PC-3 (cell line): ENCODE measurements at regions of chr7 and their contacts with region 1.

Region 1: GRCh38 chr7:96219382-96220130 is 102.3 kb downstream of the SLC25A13 start:
- DNase-seq: peak; percentile 93
- ATAC-seq: peak; percentile 97
- H3K4me3 ChIP-seq: no peak overlapping the region
- H3K27ac ChIP-seq: peak overlapping the region; percentile 74
- H3K4me1 ChIP-seq: peaks cover 25% of the 10 kb centered on the region
- H3K27me3 ChIP-seq: no peaks in the 10 kb centered on the region
- CTCF ChIP-seq: no peak

Region 2: DNA sequence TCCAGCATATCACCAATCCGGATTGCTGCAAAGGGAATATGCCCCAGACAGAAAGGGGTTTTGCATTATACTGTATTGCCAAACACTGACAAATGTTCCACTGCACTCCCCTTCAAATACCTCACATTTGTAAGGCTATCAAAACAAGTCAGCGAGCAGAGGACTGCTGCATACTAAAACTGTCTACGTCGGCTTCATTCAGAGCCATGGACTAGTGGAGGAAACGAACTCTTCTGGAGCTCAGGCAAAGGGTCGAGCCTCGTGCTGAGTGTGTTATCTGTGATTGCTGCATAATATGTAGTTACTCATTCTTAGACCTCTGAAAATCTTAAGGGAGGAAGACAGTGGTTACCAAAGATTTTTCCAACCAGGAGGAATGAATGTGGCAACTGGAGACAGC is 247.0 kb before region 1 on chr7:
- CTCF ChIA-PET with region 1: no interaction called
- POLR2A ChIA-PET with region 1: no interaction called
- intact Hi-C with region 1: no loop called
- DNase-seq: no peak
- ATAC-seq: no peak
- H3K4me3 ChIP-seq: no peak overlapping the region
- H3K27ac ChIP-seq: no peak overlapping the region
- H3K4me1 ChIP-seq: 0 out of 2 replicates have a peak, but pooled peaks cover 11% of the 10 kb centered on the region
- H3K27me3 ChIP-seq: no peaks in the 10 kb centered on the region
- CTCF ChIP-seq: no peak

Region 3: DNA sequence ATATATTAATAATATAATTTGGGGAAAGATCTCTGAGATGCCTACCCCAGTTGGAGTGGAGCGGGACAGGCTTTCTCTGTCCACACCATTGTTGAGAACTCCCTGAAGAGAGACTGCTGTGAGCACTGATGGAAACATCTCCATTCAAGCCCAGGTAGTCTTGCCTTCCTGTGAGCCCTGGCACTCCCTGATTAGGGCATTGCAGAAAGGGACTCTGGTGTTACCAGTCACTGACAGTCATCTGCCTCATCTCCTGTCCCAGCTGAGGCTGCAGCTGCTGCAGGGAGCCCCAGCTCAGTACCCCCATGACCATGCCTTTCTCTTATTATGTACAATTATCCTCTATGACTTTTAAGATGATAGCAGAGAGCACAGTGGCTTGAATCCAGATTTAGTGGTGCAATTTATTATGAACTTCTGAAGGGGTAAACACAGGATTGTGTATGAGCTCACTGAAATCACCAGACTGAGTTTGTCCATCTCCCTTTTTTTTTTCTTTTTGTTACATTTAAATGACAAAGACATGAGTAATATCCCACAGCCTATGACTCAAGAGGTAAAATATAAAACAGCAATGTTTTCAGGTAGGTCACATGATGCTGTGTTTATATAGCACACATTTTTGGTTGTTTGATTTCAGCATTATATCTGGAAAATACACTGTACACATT is 134.5 kb before region 1 on chr7:
- CTCF ChIA-PET with region 1: no interaction called
- POLR2A ChIA-PET with region 1: no interaction called
- intact Hi-C with region 1: loop called (anchors 5 kb)
- DNase-seq: peak; percentile 88
- ATAC-seq: peak; percentile 72
- H3K4me3 ChIP-seq: no peak overlapping the region
- H3K27ac ChIP-seq: peak overlapping the region; percentile 59
- H3K4me1 ChIP-seq: peaks cover 42% of the 10 kb centered on the region
- H3K27me3 ChIP-seq: no peaks in the 10 kb centered on the region
- CTCF ChIP-seq: no peak

Region 4: DNA sequence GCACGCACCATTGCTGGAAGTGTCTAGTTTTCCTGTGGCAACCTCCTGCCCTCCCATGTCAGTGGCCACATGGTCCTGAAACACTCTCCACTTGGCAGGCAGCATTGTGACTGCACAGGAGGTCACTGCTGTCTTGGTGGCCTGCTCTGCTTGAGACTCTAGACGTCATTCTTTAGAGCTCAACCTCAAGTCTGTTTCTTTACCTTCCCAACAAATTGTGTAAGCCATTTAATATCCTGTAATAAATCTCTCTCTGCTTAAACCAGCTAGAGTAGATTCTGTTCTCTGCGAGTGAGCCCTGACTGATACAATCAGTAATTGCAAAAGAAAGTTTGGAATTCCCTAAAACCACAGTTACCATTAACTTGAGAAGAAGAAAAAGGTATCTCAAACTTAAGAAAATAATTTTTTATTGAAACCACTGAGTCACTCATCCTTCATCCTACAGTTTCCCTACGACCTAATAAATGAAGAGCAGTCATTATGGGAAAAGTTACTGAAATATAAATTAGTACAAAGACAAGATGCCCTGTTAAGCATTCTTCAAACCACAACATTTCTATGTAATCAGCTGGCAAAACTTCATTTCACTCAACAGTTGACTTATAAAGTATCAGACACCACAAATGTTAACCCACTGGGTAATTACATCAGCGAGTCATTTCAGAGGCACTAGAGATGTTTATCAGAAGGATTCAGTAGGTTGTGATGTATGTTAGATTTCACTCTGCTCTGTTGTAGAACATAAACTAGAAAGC is 84.3 kb after region 1 on chr7:
- CTCF ChIA-PET with region 1: no interaction called
- POLR2A ChIA-PET with region 1: no interaction called
- intact Hi-C with region 1: loop called (anchors 5 kb)
- DNase-seq: peak; percentile 77
- ATAC-seq: peak; percentile 55
- H3K4me3 ChIP-seq: peak overlapping the region; percentile 12; the same call in 1 of the 2 replicates
- H3K27ac ChIP-seq: peak overlapping the region; percentile 97
- H3K4me1 ChIP-seq: peaks cover 40% of the 10 kb centered on the region
- H3K27me3 ChIP-seq: no peaks in the 10 kb centered on the region
- CTCF ChIP-seq: no peak